Heart right ventricle (tissue), 16 donors: ENCODE measurements at regions of chr2 and their contacts with region 1.

Region 1: DNA sequence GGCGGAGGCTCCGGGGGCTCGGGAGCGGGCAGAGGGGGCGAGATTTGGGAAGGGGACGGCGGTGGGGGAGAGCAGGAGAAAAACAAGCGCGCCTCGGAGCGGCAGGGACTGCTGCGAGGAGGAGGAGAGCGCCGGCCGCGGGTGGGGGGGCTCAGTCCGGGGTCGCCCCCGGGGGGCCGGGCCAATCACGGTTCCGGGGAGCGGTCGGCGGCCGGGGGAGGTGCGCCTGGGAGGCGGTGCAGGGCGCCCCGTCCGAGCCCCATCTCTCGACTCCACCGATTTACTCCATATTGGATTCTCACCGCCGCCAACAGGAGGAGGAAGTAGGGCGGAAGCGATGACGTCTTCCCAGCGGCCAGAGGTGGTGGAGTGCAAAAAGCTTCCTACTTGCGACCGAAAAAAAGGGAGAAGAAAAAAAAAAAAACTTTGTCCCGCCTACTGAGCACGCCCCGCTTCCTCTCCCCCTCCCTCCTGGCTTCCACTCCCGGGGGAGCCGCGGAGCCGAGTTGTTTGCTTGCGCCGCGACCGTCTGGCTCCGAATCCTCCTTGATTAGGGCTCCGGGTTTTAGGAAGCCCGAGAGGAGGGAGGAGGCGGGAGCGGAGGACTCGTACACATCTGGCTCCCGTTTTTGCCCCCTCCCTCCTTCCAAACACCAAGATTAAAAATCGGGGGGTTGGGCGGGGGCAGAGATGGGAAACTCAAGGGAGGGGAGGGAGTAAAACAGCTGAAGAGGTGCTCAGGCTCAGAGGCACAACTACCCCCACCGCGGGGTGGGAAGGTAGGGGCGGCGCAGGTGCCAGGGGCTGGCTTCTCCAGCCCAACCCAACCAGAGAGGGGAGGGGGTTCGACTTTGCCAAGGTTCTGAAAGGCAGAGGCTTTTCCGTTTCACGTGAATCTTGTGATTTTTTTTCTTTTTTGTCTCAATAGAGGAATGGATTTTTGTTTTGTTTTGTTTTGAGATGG is at the start of gene SPRED2:
- DNase-seq: peak; percentile 94 to 97
- ATAC-seq: peak; percentile 53 to 82 (median 74)
- H3K4me3 ChIP-seq: peak within 1 kb of the TSS; percentile 85 to 98 (median 95)
- H3K27ac ChIP-seq: peak within 1 kb of the TSS; percentile 82 to 98 (median 92)
- H3K4me1 ChIP-seq: peaks cover 0 to 58% (median 37%) of the 10 kb centered on the region in 9 donors
- H3K27me3 ChIP-seq: no peaks in the 10 kb centered on the region
- CTCF ChIP-seq: peak in 3 of 9 donors; percentile 13 to 32 (median 18)
- total RNA-seq, gene SPRED2: 13.5 to 20.7 (median 17.2) TPM

Region 2: GRCh38 chr2:65278531-65278981 is 154.0 kb before region 1 on chr2:
- intact Hi-C with region 1: loop called in 5 of 10 experiments (anchors 5 to 10 kb)
- DNase-seq: peak in 1 of 2 donors; percentile 30
- ATAC-seq: peak in 7 of 8 donors; percentile 39 to 73 (median 51)
- H3K4me3 ChIP-seq: no peak overlapping the region
- H3K27ac ChIP-seq: peak overlapping the region in 8 of 10 donors; percentile 7 to 57 (median 22)
- H3K4me1 ChIP-seq: peaks cover 10 to 64% (median 38%) of the 10 kb centered on the region in 9 donors
- H3K27me3 ChIP-seq: no peaks in the 10 kb centered on the region
- CTCF ChIP-seq: no peak

Region 3: DNA sequence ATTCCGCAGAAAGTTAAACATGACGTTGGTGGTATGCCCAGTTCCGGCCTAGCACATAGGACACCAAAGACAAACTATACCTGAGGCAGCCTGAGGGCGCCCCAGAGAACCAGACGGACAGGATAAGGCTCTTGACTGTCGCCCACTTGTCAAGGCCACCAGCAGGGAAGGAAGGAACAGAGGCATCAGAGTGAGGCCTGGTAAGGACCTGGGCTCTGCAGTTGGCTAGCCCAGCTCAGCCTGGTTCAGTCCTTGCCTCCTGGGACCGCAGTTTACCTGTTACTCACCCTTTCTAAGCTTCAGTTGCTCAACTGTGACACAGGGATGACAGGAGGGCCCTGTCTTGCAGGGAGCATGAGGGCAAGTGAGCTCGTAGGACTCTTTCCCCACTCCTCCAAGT is 122.8 kb before region 1 on chr2:
- intact Hi-C with region 1: loop called in 5 of 10 experiments (anchors 2 to 10 kb)
- DNase-seq: no peak
- ATAC-seq: peak in 2 of 8 donors; percentile 14 to 16
- H3K4me3 ChIP-seq: peak overlapping the region in 1 of 10 donors; percentile 9
- H3K27ac ChIP-seq: peak overlapping the region; percentile 52 to 90 (median 82)
- H3K4me1 ChIP-seq: peaks cover 9 to 50% (median 22%) of the 10 kb centered on the region in 9 donors
- H3K27me3 ChIP-seq: no peaks in the 10 kb centered on the region
- CTCF ChIP-seq: no peak

Region 4: DNA sequence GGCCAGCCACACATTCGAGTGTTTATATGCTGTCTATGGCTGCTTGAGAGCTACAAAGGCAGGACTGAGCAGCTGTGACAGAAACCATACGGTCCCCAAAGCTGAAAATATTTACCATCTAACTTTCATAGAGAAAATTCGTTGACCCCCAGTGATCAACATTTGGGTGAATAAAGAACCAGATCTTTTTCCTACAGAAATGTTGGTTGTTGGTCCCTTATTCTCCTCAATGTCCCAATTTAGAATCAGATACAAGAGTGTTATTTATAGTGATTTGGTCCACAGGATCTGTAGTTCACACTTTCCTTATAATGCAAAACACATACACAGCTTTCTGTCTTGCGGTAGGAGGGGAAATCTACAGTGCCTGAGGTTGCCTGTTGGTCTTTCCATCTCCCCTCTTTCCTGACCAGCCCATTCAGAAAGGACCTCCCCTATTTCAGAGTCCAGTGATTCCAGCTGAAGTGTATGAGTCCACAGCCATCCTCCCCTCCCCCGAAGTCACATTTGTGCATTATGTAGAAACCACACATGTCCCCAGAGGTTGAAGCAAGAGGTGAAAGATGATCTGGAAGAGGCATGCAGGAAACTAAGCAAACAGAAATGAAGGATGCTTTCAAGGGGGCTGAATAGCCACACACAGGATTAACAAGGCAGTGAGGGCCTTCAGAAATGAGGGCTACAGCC is 62.0 kb before region 1 on chr2:
- intact Hi-C with region 1: loop called in 1 of 10 experiments (anchors 5 kb)
- DNase-seq: peak in 1 of 2 donors; percentile 24
- ATAC-seq: peak in 7 of 8 donors; percentile 15 to 72 (median 48)
- H3K4me3 ChIP-seq: peak overlapping the region in 1 of 10 donors; percentile 8
- H3K27ac ChIP-seq: peak overlapping the region in 5 of 10 donors; percentile 29 to 51 (median 44)
- H3K4me1 ChIP-seq: peaks cover 8 to 89% (median 68%) of the 10 kb centered on the region in 9 donors
- H3K27me3 ChIP-seq: no peaks in the 10 kb centered on the region
- CTCF ChIP-seq: no peak

Region 5: GRCh38 chr2:65479524-65479923 is 47.0 kb after region 1 on chr2:
- intact Hi-C with region 1: loop called in 1 of 10 experiments (anchors 5 kb)
- DNase-seq: peak; percentile 48 to 57
- ATAC-seq: peak; percentile 64 to 87 (median 82)
- H3K4me3 ChIP-seq: no peak overlapping the region
- H3K27ac ChIP-seq: peak overlapping the region in 4 of 10 donors; percentile 2 to 70 (median 50)
- H3K4me1 ChIP-seq: peaks cover 0 to 30% (median 7%) of the 10 kb centered on the region in 9 donors
- H3K27me3 ChIP-seq: no peaks in the 10 kb centered on the region
- CTCF ChIP-seq: no peak

Region 6: GRCh38 chr2:65554765-65555591 is 122.5 kb after region 1 on chr2:
- intact Hi-C with region 1: loop called in 8 of 10 experiments (anchors 2 to 10 kb)
- DNase-seq: no peak
- ATAC-seq: no peak
- H3K4me3 ChIP-seq: no peak overlapping the region
- H3K27ac ChIP-seq: no peak overlapping the region
- H3K4me1 ChIP-seq: peaks cover 0 to 9% (median 4%) of the 10 kb centered on the region in 9 donors
- H3K27me3 ChIP-seq: no peaks in the 10 kb centered on the region
- CTCF ChIP-seq: no peak